ENCODE measurements at regions of chr15 and their contacts with region 1.

Region 1: DNA sequence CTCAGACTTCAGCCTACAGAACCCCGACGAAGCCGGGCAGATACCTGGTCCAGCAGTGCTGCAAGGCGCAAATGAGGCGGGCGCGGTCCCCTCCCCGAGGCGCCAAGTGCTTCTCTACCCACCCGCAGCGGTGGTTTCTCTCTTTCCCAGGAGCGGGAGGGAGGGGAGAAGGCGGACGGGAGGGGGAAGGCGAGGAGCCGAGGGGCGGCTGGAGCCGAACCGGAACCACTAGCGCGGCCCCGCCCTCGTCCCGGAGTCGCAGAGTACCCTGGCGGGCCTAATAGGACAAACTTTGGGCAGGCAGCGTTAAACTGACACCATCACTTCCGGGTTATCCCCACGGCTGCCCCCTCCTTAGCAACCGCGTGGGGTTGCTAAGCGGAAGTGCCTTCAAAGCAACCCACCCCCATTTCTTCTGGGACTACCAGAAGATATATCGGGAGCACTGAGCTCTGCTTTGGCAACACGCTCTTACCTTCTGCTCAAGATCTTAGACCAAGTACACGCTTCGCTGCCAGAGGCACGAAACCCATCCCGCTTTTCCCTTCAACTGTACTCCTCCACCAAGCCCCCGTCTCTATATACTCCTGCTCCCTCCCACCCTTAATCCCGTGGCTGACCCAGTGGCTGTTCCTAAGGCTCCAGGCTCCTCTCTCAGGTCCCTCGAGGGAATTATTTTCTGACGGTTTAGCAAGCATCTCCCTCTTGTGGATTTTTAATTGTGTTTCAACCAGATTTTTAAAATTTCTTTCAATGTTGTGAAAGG is at the start of gene CSNK1G1:
- DNase-seq: peak; percentile 93
- H3K4me3 ChIP-seq: peak within 1 kb of the TSS; percentile 63 to 93 (median 78)
- H3K27ac ChIP-seq: peak within 1 kb of the TSS; percentile 75
- H3K4me1 ChIP-seq: peaks cover 6% of the 10 kb centered on the region
- H3K27me3 ChIP-seq: no peaks in the 10 kb centered on the region
- CTCF ChIP-seq: peak; percentile 11 to 51
- total RNA-seq, gene CSNK1G1: 43.9 to 61.0 TPM

Region 2: GRCh38 chr15:64093627-64094417 is 262.3 kb before region 1 on chr15 and contains the start of gene CIAO2A:
- CTCF ChIA-PET with region 1: no interaction called
- dilution Hi-C with region 1: no loop called
- in situ Hi-C with region 1: no loop called
- intact Hi-C with region 1: loop called (anchors 10 kb)
- DNase-seq: peak; percentile 99
- H3K4me3 ChIP-seq: peak within 1 kb of the TSS; percentile 62 to 69 (median 67)
- H3K27ac ChIP-seq: peak within 1 kb of the TSS; percentile 64
- H3K4me1 ChIP-seq: peaks cover 29% of the 10 kb centered on the region
- H3K27me3 ChIP-seq: no peaks in the 10 kb centered on the region
- CTCF ChIP-seq: no peak
- total RNA-seq, gene CIAO2A: 31.8 to 47.0 TPM

Region 3: GRCh38 chr15:64162870-64163658 is 193.1 kb before region 1 on chr15 and contains the start of gene PPIB:
- CTCF ChIA-PET with region 1: no interaction called
- dilution Hi-C with region 1: no loop called
- in situ Hi-C with region 1: no loop called
- intact Hi-C with region 1: loop called (anchors 1 kb)
- DNase-seq: peak; percentile 98
- H3K4me3 ChIP-seq: peak within 1 kb of the TSS; percentile 95 to 99 (median 97)
- H3K27ac ChIP-seq: peak within 1 kb of the TSS; percentile 75
- H3K4me1 ChIP-seq: peaks cover 21% of the 10 kb centered on the region
- H3K27me3 ChIP-seq: no peaks in the 10 kb centered on the region
- CTCF ChIP-seq: peak; percentile 24 to 59
- total RNA-seq, gene PPIB: 360 to 523 TPM

Region 4: GRCh38 chr15:64187396-64188191 is 168.5 kb before region 1 on chr15:
- CTCF ChIA-PET with region 1: no interaction called
- dilution Hi-C with region 1: no loop called
- in situ Hi-C with region 1: no loop called
- intact Hi-C with region 1: loop called (anchors 1 kb)
- DNase-seq: peak; percentile 87
- H3K4me3 ChIP-seq: no peak overlapping the region
- H3K27ac ChIP-seq: no peak overlapping the region
- H3K4me1 ChIP-seq: peaks cover 15% of the 10 kb centered on the region
- H3K27me3 ChIP-seq: no peaks in the 10 kb centered on the region
- CTCF ChIP-seq: no peak

Region 5: GRCh38 chr15:64209680-64210334 is 146.3 kb before region 1 on chr15:
- CTCF ChIA-PET with region 1: interaction called, 5 read pairs
- dilution Hi-C with region 1: no loop called
- in situ Hi-C with region 1: no loop called
- intact Hi-C with region 1: loop called (anchors 1 kb)
- DNase-seq: peak; percentile 11
- H3K4me3 ChIP-seq: no peak overlapping the region
- H3K27ac ChIP-seq: no peak overlapping the region
- H3K4me1 ChIP-seq: no peaks in the 10 kb centered on the region
- H3K27me3 ChIP-seq: no peaks in the 10 kb centered on the region
- CTCF ChIP-seq: peak; percentile 9 to 32

Region 6: GRCh38 chr15:64247906-64248541 is 108.1 kb before region 1 on chr15:
- CTCF ChIA-PET with region 1: no interaction called
- dilution Hi-C with region 1: no loop called
- in situ Hi-C with region 1: loop called in 1 of 2 experiments (anchors 10 kb)
- intact Hi-C with region 1: no loop called
- DNase-seq: peak; percentile 91
- H3K4me3 ChIP-seq: no peak overlapping the region
- H3K27ac ChIP-seq: peak overlapping the region; percentile 96
- H3K4me1 ChIP-seq: peaks cover 37% of the 10 kb centered on the region
- H3K27me3 ChIP-seq: no peaks in the 10 kb centered on the region
- CTCF ChIP-seq: no peak

Region 7: DNA sequence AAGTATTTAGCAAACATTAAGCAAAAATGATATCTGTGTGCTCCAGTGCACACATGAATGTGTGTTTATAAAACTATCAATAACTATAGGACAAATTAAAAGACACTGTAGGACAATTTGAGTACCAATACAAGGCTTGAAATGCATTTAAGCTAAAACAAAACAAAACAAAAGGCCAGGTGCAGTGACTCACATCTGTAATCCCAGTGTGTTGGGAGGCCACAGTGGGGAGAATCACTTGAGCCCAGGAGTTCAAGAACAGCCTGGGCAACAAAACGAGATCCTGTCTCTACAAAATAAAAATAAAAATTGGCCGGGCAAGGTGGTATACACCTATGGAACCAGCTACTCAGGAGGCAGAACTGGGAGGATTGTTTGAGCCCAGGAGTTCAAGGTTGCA is 50.9 kb before region 1 on chr15:
- CTCF ChIA-PET with region 1: no interaction called
- dilution Hi-C with region 1: no loop called
- in situ Hi-C with region 1: no loop called
- intact Hi-C with region 1: no loop called
- DNase-seq: peak; percentile 4
- H3K4me3 ChIP-seq: no peak overlapping the region
- H3K27ac ChIP-seq: no peak overlapping the region
- H3K4me1 ChIP-seq: no peaks in the 10 kb centered on the region
- H3K27me3 ChIP-seq: no peaks in the 10 kb centered on the region
- CTCF ChIP-seq: no peak